ENCODE measurements at regions of chr13 and their contacts with region 1.

Region 1: GRCh38 chr13:35157143-35157755 is 215.2 kb downstream of the NBEA start:
- DNase-seq: peak; percentile 29
- H3K4me3 ChIP-seq: no peak overlapping the region
- H3K27ac ChIP-seq: no peak overlapping the region
- H3K4me1 ChIP-seq: no peaks in the 10 kb centered on the region
- H3K27me3 ChIP-seq: no peaks in the 10 kb centered on the region
- CTCF ChIP-seq: peak; percentile 68 to 72

Region 2: DNA sequence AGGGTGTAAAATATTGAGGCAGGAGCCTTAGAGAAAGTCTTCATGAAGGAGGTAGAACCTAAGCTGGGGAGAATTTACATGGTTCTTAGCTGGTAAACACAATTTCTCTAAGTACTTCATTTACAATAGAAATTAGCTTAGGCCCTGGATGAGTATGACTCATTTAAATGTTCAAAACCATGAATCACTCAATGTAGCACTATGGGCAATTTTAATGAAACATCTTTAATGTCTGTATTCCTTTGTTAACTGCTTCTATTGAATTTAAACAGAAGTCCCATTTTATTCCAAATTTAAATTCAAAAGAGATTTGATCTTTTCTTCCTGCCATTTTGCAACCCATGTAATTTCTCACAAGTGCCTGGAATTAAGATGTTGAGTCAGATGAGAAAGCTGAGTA is 1087.2 kb before region 1 on chr13:
- CTCF ChIA-PET with region 1: no interaction called
- dilution Hi-C with region 1: no loop called
- in situ Hi-C with region 1: loop called in 1 of 2 experiments (anchors 25 kb)
- intact Hi-C with region 1: no loop called
- DNase-seq: peak; percentile 67
- H3K4me3 ChIP-seq: no peak overlapping the region
- H3K27ac ChIP-seq: peak overlapping the region; percentile 29
- H3K4me1 ChIP-seq: peaks cover 21% of the 10 kb centered on the region
- H3K27me3 ChIP-seq: no peaks in the 10 kb centered on the region
- CTCF ChIP-seq: no peak

Measured in mammary epithelial cell (primary cell).